Mucosa of descending colon (tissue), 3 donors: ENCODE measurements at regions of chr9 and their contacts with region 1.

Region 1: GRCh38 chr9:94783102-94783664 is 56.7 kb downstream of the AOPEP start:
- DNase-seq: peak; percentile 53 to 90 (median 60)
- ATAC-seq: peak; percentile 96
- H3K4me3 ChIP-seq: no peak overlapping the region
- H3K4me1 ChIP-seq: no peaks in the 10 kb centered on the region
- CTCF ChIP-seq: no peak

Region 2: GRCh38 chr9:94973451-94973941 is 190.3 kb after region 1 on chr9:
- intact Hi-C with region 1: no loop called
- DNase-seq: no peak
- ATAC-seq: peak; percentile 15
- H3K4me3 ChIP-seq: no peak overlapping the region
- H3K4me1 ChIP-seq: peaks cover 3% of the 10 kb centered on the region
- CTCF ChIP-seq: no peak

Region 3: GRCh38 chr9:95025213-95026147 is 242.3 kb after region 1 on chr9:
- intact Hi-C with region 1: loop called in 1 of 2 experiments (anchors 10 kb)
- DNase-seq: peak; percentile 68 to 77 (median 70)
- ATAC-seq: peak; percentile 94
- H3K4me3 ChIP-seq: no peak overlapping the region
- H3K4me1 ChIP-seq: peaks cover 28% of the 10 kb centered on the region
- CTCF ChIP-seq: no peak

Region 4: DNA sequence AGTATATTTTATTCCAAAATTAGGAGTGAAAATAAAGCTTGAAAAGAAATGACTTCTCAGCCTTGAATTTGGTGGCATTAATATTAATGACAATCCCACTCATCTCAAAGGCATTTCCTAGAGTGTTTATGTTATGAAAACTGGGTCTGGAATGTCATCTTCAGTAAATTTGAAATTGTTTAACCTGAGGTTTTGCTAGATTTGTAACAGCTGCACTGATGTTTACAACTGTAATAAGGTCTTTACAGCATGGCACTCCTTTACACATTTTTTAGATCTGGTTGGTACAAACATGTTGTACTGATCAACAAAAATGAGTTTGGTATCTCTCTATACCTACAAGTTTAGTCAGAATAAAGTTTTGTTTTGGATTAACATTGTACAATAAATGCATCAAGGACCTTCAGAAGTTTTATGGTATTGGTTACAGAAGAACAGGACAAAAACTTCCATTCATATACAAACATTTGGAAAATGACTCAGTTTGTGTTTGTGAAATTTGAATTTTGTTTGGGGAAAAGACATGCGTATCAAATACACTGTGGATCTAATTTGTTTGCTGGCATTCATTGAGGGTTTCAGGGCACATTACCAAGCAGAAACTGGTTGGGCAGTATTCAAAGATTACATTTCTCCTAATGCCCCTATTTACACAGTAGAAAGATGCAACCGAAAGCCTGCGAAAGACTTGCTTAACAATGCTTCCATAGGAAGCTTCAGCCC is 522.7 kb after region 1 on chr9:
- intact Hi-C with region 1: no loop called
- DNase-seq: no peak
- ATAC-seq: no peak
- H3K4me3 ChIP-seq: no peak overlapping the region
- H3K4me1 ChIP-seq: peaks cover 12% of the 10 kb centered on the region
- CTCF ChIP-seq: no peak